WTC11 (cell line): ENCODE measurements at regions of chr14 and their contacts with region 1.

Region 1: DNA sequence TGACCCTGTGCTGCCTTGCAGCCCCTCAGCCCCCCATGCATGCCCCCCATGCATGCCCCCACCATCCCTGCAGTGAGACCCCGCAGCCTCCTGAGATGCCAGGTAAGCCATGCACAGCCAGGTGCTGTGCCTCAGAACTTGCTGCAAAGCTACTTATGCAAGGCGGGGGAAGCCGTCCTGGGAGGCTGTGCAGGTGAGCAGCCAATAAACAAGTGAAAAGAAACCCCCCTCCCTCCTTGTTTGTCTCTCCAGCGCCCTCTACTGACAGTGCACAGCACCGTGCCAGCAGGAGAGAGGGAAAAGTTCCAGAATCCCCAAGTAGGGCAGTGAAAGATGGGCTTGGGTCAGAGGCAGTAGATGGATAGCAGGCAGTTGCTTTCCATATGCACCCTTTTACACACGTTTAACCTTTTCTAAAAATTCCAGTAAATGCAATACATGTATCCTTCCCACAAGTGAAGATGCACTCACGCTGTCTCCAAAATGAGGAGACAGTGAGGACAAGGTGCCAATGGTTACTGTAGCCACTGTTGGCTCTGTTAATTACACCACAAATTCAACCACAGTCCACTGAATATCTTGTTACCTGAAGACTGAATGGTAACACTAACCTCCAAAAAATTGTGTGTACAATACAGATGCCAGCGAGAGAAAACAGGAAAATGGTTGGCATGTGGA is 18.0 kb downstream of the TNFAIP2 start:
- DNase-seq: peak; percentile 90
- ATAC-seq: peak; percentile 63
- H3K4me3 Mint-ChIP-seq: peak overlapping the region; percentile 33; the same call in 1 of the 2 replicates
- H3K27ac Mint-ChIP-seq: no peak overlapping the region
- H3K4me1 Mint-ChIP-seq: peaks cover 31% of the 10 kb centered on the region
- H3K27me3 Mint-ChIP-seq: peaks cover 21% of the 10 kb centered on the region
- CTCF ChIP-seq: peak; percentile 77

Region 2: DNA sequence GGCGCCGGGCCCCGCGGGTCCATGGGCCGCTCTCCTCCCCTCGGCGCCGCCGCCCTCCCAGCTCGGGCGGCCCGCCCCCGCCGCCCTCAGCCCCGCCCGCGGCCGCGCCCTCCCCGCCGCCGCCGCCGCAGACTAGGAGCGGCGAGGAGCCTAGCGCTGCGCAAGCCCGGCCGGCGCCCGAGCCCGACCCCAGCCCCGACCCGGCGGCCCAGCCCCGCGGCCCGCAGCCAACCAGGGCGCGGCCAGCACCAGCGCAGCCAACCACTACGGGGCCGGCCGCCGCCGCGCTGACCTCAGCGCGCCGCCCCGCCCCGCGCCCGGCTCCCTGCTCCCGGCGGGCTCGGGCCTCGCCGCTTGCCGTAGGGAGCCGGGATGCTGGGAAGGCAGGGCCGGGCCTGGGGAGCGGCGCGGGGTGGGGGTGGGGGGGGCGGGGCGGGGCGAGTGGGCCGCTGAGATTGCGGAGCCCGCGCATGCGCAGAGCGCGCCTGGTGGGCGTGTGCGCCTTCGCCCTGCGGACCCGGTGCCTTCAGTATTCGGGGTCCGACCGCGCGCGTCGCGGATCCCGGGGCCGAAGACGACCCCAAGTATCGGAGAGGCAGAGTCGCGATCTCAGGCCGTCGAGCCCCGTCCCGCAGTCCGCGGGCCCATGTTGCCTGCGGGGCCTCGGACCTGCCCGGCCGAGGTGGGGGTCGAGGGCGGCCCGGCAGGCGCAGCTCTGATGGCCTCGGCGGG is 83.7 kb before region 1 on chr14 and contains the start of gene CDC42BPB:
- CTCF ChIA-PET with region 1: no interaction called
- POLR2A ChIA-PET with region 1: no interaction called
- DNase-seq: peak; percentile 85
- ATAC-seq: peak; percentile 96
- H3K4me3 Mint-ChIP-seq: peak within 1 kb of the TSS; percentile 84
- H3K27ac Mint-ChIP-seq: no peak within 1 kb of the TSS
- H3K4me1 Mint-ChIP-seq: peaks cover 27% of the 10 kb centered on the region
- H3K27me3 Mint-ChIP-seq: no peaks in the 10 kb centered on the region; the same call in 1 of the 2 replicates
- CTCF ChIP-seq: no peak
- total RNA-seq, gene CDC42BPB: 87.1 to 96.9 TPM (median 87.3 TPM) in 3 replicates

Region 3: DNA sequence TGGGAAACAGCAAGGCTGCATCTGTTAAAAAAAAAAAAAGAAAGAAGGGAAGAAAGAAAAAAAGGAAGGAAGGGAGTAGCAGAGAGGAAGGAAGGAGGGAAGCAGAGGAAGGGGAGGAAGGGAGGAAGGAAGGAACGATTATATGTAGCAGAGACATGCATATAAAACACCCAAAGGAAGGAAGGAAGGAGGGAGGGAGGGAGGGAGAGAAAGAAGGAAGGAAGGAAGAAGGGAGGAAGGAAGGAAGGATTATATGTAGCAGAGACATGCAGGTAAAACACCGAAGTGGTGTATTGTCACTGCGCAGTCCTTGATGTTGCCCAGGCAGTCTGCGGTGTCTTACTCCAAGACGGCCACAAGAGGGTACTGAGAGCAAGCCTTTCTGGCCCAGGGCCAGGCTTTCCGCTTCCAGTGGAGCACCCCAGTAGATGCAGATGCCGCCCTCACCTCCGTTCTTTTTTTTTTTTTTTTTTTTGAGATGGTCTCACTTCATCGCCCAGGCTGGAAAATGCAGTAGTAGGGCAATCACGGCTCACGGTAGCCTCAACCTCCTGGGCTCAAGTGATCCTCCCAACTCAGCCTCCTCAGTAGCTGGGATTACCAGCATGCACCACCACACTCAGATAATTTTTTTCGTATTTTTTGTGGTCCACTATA is 63.0 kb before region 1 on chr14:
- CTCF ChIA-PET with region 1: interaction called, 13 read pairs
- POLR2A ChIA-PET with region 1: no interaction called
- DNase-seq: peak; percentile 77
- ATAC-seq: peak; percentile 78
- H3K4me3 Mint-ChIP-seq: no peak overlapping the region
- H3K27ac Mint-ChIP-seq: no peak overlapping the region
- H3K4me1 Mint-ChIP-seq: no peaks in the 10 kb centered on the region
- H3K27me3 Mint-ChIP-seq: peaks cover 5% of the 10 kb centered on the region
- CTCF ChIP-seq: peak; percentile 68; the same call in 1 of the 2 replicates

Region 4: GRCh38 chr14:103121846-103122584 is 19.2 kb before region 1 on chr14:
- CTCF ChIA-PET with region 1: interaction called, 32 read pairs
- POLR2A ChIA-PET with region 1: interaction called, 5 read pairs
- DNase-seq: no peak
- ATAC-seq: peak; percentile 17
- H3K4me3 Mint-ChIP-seq: peak overlapping the region; percentile 58
- H3K27ac Mint-ChIP-seq: no peak overlapping the region
- H3K4me1 Mint-ChIP-seq: peaks cover 16% of the 10 kb centered on the region
- H3K27me3 Mint-ChIP-seq: peaks cover 26% of the 10 kb centered on the region
- CTCF ChIP-seq: no peak

Region 5: DNA sequence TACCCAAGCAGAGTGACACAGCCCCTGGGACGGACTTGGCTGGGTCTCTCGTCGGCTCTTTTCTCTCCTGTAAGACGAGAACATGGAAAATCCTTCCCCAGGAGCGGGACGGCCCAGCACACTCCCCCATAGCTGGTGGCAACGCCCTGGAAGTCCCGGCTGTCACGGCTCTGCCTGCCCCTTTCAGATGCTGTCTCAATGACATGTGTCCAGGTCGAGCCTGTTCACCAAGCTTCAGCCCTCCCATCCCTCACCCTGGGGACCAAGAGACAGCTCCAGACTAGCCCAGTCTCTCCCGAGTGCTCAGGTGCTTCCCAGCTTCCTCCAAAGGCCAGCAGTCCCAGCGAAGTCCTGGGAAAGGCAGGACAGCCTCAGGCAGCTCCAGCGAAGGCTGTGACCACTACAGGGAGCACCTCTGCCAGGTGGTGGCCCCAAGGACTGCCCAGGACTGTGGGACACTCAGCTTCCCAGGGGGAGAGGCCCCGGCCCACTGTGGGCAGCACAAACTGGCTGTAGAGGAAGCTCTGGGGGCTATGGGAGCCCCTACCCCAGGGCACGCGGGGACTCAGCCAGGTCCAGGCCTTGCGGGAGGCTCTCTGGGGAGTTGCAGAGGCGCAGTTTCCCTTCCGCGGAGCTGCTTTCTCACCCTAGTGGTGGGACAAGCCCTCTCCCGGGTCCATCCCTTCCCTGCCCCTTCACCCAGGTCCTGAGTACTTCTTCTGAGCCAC is 15.6 kb after region 1 on chr14:
- CTCF ChIA-PET with region 1: interaction called, 25 read pairs
- POLR2A ChIA-PET with region 1: no interaction called
- DNase-seq: peak; percentile 24
- ATAC-seq: peak; percentile 71
- H3K4me3 Mint-ChIP-seq: no peak overlapping the region
- H3K27ac Mint-ChIP-seq: 0 out of 2 replicates have a peak overlapping the region, but pooled peaks have one; percentile 45
- H3K4me1 Mint-ChIP-seq: 0 out of 2 replicates have a peak, but pooled peaks cover 6% of the 10 kb centered on the region
- H3K27me3 Mint-ChIP-seq: no peaks in the 10 kb centered on the region
- CTCF ChIP-seq: no peak

Region 6: GRCh38 chr14:103273145-103273744 is 132.0 kb after region 1 on chr14:
- CTCF ChIA-PET with region 1: interaction called, 7 read pairs
- POLR2A ChIA-PET with region 1: interaction called, 10 read pairs
- DNase-seq: peak; percentile 53
- ATAC-seq: peak; percentile 52
- H3K4me3 Mint-ChIP-seq: peak overlapping the region; percentile 58
- H3K27ac Mint-ChIP-seq: no peak overlapping the region
- H3K4me1 Mint-ChIP-seq: 0 out of 2 replicates have a peak, but pooled peaks cover 3% of the 10 kb centered on the region
- H3K27me3 Mint-ChIP-seq: peaks cover 65% of the 10 kb centered on the region
- CTCF ChIP-seq: no peak